Common myeloid progenitor, CD34-positive (primary cell): ENCODE measurements at regions of chr4 and their contacts with region 1.

Region 1: DNA sequence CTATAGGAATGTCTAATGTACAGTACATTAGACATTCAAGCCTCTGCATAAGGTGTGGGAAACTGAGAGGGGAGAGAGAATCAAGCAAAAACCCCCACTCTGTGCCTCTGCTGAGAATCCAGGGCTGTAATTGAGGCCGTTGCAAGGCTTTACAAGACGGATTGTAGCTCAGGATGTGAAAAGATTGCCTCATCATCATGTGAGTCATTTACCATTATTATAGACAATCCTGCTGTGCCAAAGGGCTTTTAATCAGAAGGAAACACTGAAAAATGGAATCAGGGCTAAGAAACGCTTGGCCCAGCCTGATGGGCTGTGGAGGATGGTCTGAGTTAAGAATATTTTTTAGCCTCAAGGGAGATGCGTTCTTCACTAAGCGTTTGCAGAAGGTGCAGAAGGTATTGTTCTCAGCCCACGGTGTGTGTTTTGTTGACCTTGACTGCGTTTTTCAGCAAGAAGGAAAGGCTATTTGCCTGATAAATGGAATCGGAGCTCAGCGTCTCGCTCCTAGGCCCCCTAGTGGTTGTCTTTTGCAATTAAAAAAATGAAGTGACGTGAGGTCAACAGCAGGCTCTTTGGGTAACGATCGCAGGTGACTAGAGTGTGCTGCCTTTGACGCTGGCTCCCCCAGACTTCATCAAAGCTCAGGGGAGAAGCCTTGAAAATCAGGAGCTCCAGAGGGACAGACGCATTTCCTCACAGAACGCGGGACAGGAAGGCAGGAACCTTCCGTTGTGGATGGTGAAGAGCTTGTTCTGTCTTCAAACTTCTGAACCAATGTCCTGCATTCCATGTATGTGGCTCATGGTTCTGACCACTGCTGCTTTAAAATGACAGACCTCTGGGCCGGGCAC is 18.1 kb upstream of the CHRNA9 start:
- DNase-seq: peak; percentile 83 to 93 (median 88)
- H3K4me3 ChIP-seq: peak overlapping the region in 5 of 7 experiments; percentile 24 to 67 (median 51)
- H3K27ac ChIP-seq: peak overlapping the region; percentile 98 to 99
- H3K4me1 ChIP-seq: peaks cover 20 to 68% (median 46%) of the 10 kb centered on the region in 4 experiments
- H3K27me3 ChIP-seq: no peaks in the 10 kb centered on the region

Region 2: GRCh38 chr4:40056716-40057585 is 260.1 kb before region 1 on chr4 and contains the start of gene N4BP2:
- CTCF ChIA-PET with region 1: interaction called, 8 read pairs
- POLR2A ChIA-PET with region 1: interaction called, 10 read pairs
- DNase-seq: peak; percentile 84 to 90 (median 85)
- H3K4me3 ChIP-seq: peak within 1 kb of the TSS; percentile 81 to 97 (median 85)
- H3K27ac ChIP-seq: peak within 1 kb of the TSS; percentile 90 to 97
- H3K4me1 ChIP-seq: peaks cover 15 to 50% (median 31%) of the 10 kb centered on the region in 4 experiments
- H3K27me3 ChIP-seq: no peaks in the 10 kb centered on the region

Region 3: DNA sequence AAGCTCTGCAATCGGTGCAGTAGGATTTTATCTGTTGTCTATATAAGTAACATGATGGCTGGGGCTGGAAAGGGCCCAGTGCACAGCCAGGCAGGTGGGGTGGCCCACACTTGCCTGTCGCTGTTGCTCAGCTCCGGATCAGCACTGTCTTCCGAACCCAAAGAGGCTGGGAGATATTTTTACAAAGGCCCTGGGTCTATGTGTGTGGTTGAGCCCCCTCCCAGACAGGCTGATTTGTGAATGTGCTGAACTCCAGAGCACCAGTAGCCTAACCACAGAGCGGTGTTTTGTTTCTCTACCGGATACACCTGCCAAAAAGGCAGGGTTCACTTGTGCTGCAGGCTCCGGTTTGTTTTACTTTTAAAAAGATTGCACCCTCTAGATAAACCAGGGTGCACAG is 15.4 kb before region 1 on chr4:
- CTCF ChIA-PET with region 1: interaction called, 17 read pairs
- POLR2A ChIA-PET with region 1: interaction called, 24 read pairs
- DNase-seq: peak; percentile 92 to 99 (median 98)
- H3K4me3 ChIP-seq: peak overlapping the region in 3 of 7 experiments; percentile 1 to 36 (median 26)
- H3K27ac ChIP-seq: peak overlapping the region; percentile 55 to 74
- H3K4me1 ChIP-seq: peaks cover 30 to 81% (median 62%) of the 10 kb centered on the region in 4 experiments
- H3K27me3 ChIP-seq: no peaks in the 10 kb centered on the region